K562 (cell line): ENCODE measurements at regions of chr18 and their contacts with region 1.

Region 1: DNA sequence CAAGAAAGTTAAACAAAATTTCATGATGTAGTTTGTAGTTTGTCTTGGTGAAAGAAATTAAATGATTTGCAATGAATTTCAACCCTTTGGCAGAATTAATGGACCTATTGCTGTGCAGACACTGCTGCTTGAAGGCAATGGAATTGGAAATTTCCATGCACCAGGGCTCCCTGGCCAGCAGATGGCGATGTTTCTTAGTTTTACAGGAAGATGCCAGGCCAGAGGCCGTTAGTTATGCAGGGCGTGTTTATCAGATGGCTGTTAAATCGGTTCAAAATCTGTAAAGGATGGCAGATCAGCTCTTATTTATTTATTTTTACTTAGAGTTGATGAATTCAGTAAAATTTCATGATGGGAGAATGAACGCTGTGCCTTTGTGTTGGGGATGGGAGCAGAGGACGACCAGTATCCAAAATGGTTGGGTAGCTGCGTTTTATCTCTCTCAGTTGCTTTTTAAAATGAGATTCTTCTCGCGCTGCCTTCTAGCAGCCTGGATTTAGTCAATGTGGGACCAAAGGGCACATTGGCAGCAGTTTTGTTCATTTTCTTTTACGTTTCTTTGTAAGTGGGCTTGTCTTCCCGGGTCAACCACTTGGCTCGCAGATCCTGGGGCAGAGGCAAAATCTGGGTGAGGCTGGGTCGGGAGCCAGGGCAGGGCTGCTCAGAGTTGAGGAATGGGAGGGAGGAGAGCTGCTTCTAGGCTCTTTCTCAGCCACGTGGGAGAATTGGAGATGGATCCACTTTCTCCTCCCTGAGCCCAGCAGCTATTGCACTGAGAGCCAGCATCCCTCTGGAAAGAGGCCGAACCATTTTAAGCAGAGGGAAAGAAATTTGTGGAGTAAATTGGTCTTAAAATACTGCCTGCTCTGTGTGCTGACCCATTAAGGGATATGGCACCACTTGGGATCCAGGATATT is 344.0 kb downstream of the PIK3C3 start:
- DNase-seq: peak; percentile 38 to 52 (median 42)
- ATAC-seq: peak; percentile 66; the same call in 2 of the 3 replicates
- H3K4me3 ChIP-seq: no peak overlapping the region
- H3K27ac ChIP-seq: no peak overlapping the region
- H3K4me1 ChIP-seq: no peaks in the 10 kb centered on the region
- H3K27me3 ChIP-seq: no peaks in the 10 kb centered on the region
- CTCF ChIP-seq: peak; percentile 36 to 64 (median 60); a peak in 5 of 6 replicates
- EP300 ChIP-seq: no peak
- POLR2A ChIP-seq: no peak
- RAD21 ChIP-seq: peak; percentile 49 to 55

Region 2: DNA sequence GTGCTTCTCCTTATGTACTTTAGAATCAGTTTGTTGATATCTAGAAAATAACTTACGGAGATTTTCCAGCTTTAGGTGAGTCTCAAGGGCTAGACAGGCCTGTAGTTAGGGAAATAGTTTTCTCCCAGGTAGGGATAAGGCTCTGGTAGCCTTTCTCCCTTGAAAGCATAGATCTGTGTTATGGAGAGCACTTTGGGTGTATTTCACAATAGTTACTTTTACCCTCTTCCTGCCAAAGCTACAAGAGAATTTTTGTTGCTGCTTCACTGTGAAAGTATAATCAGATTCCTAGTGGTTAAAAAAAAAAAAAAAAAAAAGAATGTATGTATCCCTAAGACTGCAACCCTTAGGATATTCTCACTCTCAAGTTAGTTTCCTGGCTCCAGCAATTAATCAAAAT is 76.5 kb before region 1 on chr18:
- CTCF ChIA-PET with region 1: no interaction called
- POLR2A ChIA-PET with region 1: no interaction called
- in situ Hi-C with region 1: no loop called
- intact Hi-C with region 1: no loop called
- DNase-seq: no peak
- ATAC-seq: no peak
- H3K4me3 ChIP-seq: no peak overlapping the region
- H3K27ac ChIP-seq: no peak overlapping the region
- H3K4me1 ChIP-seq: no peaks in the 10 kb centered on the region
- H3K27me3 ChIP-seq: no peaks in the 10 kb centered on the region
- CTCF ChIP-seq: no peak
- EP300 ChIP-seq: no peak
- POLR2A ChIP-seq: no peak
- RAD21 ChIP-seq: no peak

Region 3: GRCh38 chr18:42326752-42327151 is 27.7 kb after region 1 on chr18:
- CTCF ChIA-PET with region 1: no interaction called
- POLR2A ChIA-PET with region 1: no interaction called
- in situ Hi-C with region 1: no loop called
- intact Hi-C with region 1: no loop called
- DNase-seq: no peak
- ATAC-seq: no peak
- H3K4me3 ChIP-seq: no peak overlapping the region
- H3K27ac ChIP-seq: no peak overlapping the region
- H3K4me1 ChIP-seq: no peaks in the 10 kb centered on the region
- H3K27me3 ChIP-seq: no peaks in the 10 kb centered on the region
- CTCF ChIP-seq: no peak
- EP300 ChIP-seq: no peak
- POLR2A ChIP-seq: no peak
- RAD21 ChIP-seq: no peak

Region 4: GRCh38 chr18:43271593-43272432 is 972.8 kb after region 1 on chr18:
- CTCF ChIA-PET with region 1: interaction called, 3 read pairs
- POLR2A ChIA-PET with region 1: no interaction called
- in situ Hi-C with region 1: loop called (anchors 10 kb)
- intact Hi-C with region 1: loop called (anchors 5 kb)
- DNase-seq: peak; percentile 4 to 34 (median 23)
- ATAC-seq: no peak
- H3K4me3 ChIP-seq: no peak overlapping the region
- H3K27ac ChIP-seq: no peak overlapping the region
- H3K4me1 ChIP-seq: no peaks in the 10 kb centered on the region
- H3K27me3 ChIP-seq: no peaks in the 10 kb centered on the region
- CTCF ChIP-seq: peak; percentile 21 to 58 (median 29); a peak in 2 of 6 replicates
- EP300 ChIP-seq: no peak
- POLR2A ChIP-seq: no peak
- RAD21 ChIP-seq: peak; percentile 51 to 52; a peak in 3 of 4 replicates